HepG2 (cell line): ENCODE measurements at regions of chr3 and their contacts with region 1.

Region 1: GRCh38 chr3:126180477-126181397 is at the start of gene ALDH1L1:
- DNase-seq: peak; percentile 69
- ATAC-seq: peak; percentile 77
- H3K4me3 ChIP-seq: peak within 1 kb of the TSS; percentile 73 to 81 (median 78)
- H3K27ac ChIP-seq: peak within 1 kb of the TSS; percentile 93
- H3K4me1 ChIP-seq: peaks cover 74% of the 10 kb centered on the region
- H3K27me3 ChIP-seq: no peaks in the 10 kb centered on the region
- CTCF ChIP-seq: 0 out of 2 replicates have a peak, but pooled peaks have one; percentile 23
- EP300 ChIP-seq: no peak
- POLR2A ChIP-seq: peak; percentile 65 to 79
- RAD21 ChIP-seq: no peak
- total RNA-seq, gene ALDH1L1: 20.8 and 28.7 TPM in 2 replicates

Region 2: DNA sequence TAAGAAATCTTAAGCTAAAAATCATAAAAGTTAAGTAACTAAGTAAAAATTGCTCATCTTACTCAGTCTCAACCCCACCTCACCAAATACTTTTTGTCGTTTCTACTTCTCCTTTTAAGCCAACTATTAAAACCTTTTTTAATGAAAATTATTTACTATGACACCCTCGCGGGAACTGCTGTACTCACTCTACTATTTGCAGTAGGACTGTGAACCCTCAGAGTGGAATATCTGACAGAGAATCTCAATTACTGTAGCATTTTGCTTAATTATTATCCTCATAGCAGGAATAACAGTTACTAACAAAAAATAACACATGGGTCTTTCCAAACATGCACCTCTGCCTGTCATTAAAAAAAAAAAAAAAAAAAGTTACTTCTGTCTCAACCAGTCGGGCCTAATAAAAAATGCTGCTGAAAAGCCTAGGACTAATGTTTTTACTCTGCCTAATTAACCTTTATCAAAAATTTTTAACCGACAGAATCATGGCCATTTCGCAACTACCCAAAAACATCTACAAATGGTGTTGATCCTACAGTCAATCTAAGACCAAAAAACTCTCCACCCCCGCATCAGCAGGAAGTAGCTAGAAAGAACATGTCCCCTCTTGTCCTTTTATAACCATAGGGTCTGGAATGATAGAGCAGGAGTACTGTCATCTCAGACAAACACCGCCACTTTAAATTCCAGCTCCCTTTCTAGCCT is 10.5 kb before region 1 on chr3:
- CTCF ChIA-PET with region 1: no interaction called
- POLR2A ChIA-PET with region 1: interaction called, 15 read pairs
- in situ Hi-C with region 1: no loop called
- intact Hi-C with region 1: no loop called
- DNase-seq: no peak
- ATAC-seq: peak; percentile 67
- H3K4me3 ChIP-seq: peak overlapping the region; percentile 19 to 48 (median 45); a peak in 5 of 6 replicates
- H3K27ac ChIP-seq: peak overlapping the region; percentile 69
- H3K4me1 ChIP-seq: peaks cover 49% of the 10 kb centered on the region
- H3K27me3 ChIP-seq: no peaks in the 10 kb centered on the region
- CTCF ChIP-seq: no peak
- EP300 ChIP-seq: no peak
- POLR2A ChIP-seq: no peak
- RAD21 ChIP-seq: no peak

Region 3: DNA sequence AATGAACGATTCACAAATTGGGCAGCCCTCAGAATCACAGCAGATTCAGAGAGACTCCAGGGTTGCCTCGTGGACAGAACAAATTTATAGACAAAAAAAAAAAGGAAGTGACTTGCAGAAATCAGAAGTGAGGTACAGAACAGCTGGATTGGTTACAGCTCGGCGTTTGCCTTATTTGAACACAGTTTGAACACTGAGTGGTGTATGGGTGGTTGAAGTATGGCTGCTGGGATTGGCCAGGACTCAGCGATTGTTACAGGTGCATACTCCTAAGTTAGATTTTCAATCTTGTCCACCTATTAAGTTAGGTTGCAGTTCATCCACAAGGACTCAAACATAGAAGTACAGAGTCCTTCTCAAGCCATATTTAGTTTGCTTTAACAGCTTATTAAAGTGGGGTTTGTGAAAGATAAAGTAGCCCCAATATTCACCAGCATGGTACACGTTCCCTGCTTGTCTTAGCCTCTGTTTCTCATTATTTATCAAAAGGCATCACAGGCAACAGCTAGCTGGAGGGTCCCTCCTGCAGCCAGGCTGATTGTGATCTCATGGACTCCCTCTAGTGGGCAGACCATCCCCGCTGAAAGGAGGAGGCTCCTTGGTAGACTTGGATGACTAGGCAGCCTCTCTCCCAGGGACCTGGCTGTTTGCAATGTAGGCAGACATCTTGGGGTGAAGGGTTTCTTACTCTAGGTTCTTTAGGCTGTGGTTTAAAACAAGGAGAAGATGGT is 17.3 kb after region 1 on chr3:
- CTCF ChIA-PET with region 1: no interaction called
- POLR2A ChIA-PET with region 1: interaction called, 17 read pairs
- in situ Hi-C with region 1: no loop called
- intact Hi-C with region 1: no loop called
- DNase-seq: peak; percentile 62
- ATAC-seq: peak; percentile 99
- H3K4me3 ChIP-seq: no peak overlapping the region
- H3K27ac ChIP-seq: peak overlapping the region; percentile 26
- H3K4me1 ChIP-seq: no peaks in the 10 kb centered on the region
- H3K27me3 ChIP-seq: no peaks in the 10 kb centered on the region
- CTCF ChIP-seq: peak; percentile 91
- EP300 ChIP-seq: no peak
- POLR2A ChIP-seq: no peak
- RAD21 ChIP-seq: peak; percentile 61

Region 4: GRCh38 chr3:126419886-126420786 is 239.4 kb after region 1 on chr3:
- CTCF ChIA-PET with region 1: no interaction called
- POLR2A ChIA-PET with region 1: no interaction called
- in situ Hi-C with region 1: no loop called
- intact Hi-C with region 1: no loop called
- DNase-seq: peak; percentile 35
- ATAC-seq: peak; percentile 36
- H3K4me3 ChIP-seq: peak overlapping the region in 1 of 3 experiments; percentile 40; a peak in 1 of 6 replicates
- H3K27ac ChIP-seq: no peak overlapping the region
- H3K4me1 ChIP-seq: peaks cover 33% of the 10 kb centered on the region
- H3K27me3 ChIP-seq: peaks cover 1 to 13% of the 10 kb centered on the region in 2 experiments; a peak in 4 of 5 replicates
- CTCF ChIP-seq: no peak
- EP300 ChIP-seq: no peak
- POLR2A ChIP-seq: no peak
- RAD21 ChIP-seq: no peak